ENCODE measurements at regions of chr19 and their contacts with region 1.

Region 1: DNA sequence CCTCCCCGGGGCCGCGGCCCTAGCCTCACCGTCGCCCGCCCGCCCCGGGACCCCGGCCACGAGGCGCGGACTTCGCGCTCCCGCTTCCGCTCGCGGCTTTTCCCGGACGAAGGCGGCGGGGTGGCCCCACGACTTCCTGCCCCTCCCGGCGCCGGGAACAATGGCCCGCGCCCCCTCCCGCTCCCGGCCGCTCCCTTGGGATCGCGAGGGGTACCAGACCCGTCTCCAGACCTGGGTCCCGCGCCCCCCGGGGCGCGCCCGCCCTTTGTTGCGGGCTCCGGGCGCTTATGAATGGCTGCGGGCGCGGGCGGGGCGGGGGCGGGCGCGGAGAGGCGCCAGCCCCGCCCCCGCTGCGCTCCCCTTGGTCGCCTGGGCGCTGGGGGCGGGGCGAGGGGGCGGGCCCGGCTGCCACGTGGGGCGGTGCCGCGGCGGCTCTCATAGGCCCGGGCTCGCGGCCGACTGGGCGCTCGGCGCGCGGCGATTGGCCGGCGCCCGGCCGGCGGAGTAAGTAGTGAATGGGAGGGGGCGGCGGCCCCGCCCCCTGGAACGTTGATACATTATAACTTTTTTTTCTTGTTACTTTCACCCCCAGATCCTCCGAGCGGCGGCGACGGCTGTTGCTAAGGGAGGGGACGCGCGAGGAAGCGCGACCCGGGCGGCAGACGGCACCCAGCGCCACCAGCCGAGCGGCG is 1.1 kb downstream of the MIDN start:
- DNase-seq: peak; percentile 87 to 94
- ATAC-seq: peak; percentile 12
- H3K4me3 ChIP-seq: peak overlapping the region; percentile 69 to 89 (median 85)
- H3K27ac ChIP-seq: peak overlapping the region; percentile 95 to 100 (median 98)
- H3K4me1 ChIP-seq: peaks cover 51 to 67% of the 10 kb centered on the region in 2 donors
- H3K27me3 ChIP-seq: no peaks in the 10 kb centered on the region
- CTCF ChIP-seq: no peak
- POLR2A ChIP-seq: peak; percentile 94 to 100

Region 2: DNA sequence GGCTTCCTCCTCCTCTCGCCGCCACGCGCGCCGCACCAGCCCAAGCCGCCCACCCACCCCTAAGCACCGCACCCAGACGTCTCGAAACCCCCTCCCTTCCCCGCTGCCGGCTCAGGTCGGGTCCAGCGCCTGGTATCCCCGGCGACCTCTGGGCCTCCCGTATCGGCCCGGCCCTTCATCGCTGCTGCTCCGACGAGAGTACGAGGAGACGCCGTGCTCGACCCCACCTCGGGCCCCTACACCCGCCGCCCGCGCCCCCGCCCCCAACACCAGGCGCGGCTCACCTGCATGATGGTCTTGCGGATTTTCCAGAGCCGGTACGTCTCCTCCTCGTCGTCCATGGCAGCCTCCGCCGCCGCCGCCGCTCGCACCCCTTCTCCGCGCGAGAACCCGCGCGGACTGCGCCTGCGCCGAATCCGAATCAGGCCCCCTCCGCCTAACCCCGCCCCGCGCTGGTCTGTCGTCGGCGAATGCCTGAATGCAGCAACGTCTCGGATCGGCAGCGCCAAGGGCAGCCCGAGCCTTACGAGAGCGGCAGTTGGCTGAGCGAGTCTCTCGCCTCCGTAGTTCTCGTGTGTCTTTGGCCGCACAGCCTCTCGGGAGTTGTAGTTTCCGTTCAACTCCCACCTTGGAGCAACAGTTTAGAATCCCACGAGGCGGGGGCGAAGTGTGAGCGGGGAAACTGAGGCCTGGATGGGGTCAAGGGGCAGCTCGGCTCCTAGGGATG is 154.3 kb before region 1 on chr19 and contains the start of gene POLR2E:
- in situ Hi-C with region 1: no loop called
- intact Hi-C with region 1: no loop called
- DNase-seq: peak; percentile 99
- ATAC-seq: peak; percentile 95 to 98
- H3K4me3 ChIP-seq: peak within 1 kb of the TSS; percentile 79 to 99 (median 98)
- H3K27ac ChIP-seq: peak within 1 kb of the TSS; percentile 79 to 94 (median 92)
- H3K4me1 ChIP-seq: peaks cover 26 to 30% of the 10 kb centered on the region in 2 donors
- H3K27me3 ChIP-seq: no peaks in the 10 kb centered on the region
- CTCF ChIP-seq: no peak
- POLR2A ChIP-seq: peak; percentile 88 to 92
- total RNA-seq, gene POLR2E: 118 to 263 (median 228) TPM

Region 3: DNA sequence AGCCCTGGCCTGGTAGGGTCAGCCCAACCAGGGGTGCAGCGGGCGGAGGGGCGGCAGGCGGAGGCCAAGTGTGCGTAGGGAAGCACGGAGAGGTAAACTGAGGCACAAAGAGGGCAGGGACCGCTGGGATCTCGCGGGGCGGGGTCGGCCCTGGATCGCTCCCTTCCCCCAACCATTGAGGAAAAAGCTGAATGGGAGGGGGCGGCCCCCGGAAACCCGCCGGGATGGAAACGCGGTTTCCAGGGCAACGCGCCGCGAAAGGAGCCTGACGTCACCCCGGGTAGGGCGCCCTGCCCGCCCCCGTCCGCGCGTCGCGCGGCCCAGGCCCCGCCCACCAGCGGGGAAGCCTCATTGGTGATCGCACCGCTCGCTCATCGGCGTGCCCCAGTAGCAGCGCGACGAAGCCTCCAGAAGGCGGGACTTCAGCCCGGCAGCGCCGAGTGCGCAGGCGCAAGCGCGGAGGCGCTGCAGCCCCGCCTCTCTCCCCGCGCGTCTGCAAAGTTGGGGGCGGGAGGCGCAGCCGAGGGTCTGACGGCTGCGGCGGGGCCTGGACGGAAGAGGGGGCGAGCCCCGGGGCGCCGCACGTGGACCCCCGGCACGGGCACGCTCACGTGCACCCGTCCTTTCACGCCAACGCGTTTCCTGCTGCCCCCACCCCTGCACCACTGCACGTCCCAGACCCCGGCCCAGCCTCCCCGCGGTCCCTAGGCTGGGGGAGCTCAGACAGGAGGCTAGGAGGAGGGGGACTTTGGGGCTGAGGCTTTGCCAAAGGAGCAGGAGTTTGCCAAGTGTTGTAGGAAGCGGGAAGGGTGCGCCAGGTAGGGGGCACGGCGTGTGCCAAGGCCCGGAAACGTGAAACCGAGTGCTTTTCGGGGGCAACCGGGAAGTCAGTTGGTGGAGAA is 11.4 kb after region 1 on chr19:
- in situ Hi-C with region 1: no loop called
- intact Hi-C with region 1: loop called (anchors 1 kb)
- DNase-seq: peak; percentile 94
- ATAC-seq: peak; percentile 70 to 80
- H3K4me3 ChIP-seq: peak overlapping the region; percentile 60 to 93 (median 74)
- H3K27ac ChIP-seq: peak overlapping the region; percentile 94 to 99 (median 96)
- H3K4me1 ChIP-seq: peaks cover 42 to 43% of the 10 kb centered on the region in 2 donors
- H3K27me3 ChIP-seq: no peaks in the 10 kb centered on the region
- CTCF ChIP-seq: no peak
- POLR2A ChIP-seq: peak; percentile 40 to 52

Region 4: DNA sequence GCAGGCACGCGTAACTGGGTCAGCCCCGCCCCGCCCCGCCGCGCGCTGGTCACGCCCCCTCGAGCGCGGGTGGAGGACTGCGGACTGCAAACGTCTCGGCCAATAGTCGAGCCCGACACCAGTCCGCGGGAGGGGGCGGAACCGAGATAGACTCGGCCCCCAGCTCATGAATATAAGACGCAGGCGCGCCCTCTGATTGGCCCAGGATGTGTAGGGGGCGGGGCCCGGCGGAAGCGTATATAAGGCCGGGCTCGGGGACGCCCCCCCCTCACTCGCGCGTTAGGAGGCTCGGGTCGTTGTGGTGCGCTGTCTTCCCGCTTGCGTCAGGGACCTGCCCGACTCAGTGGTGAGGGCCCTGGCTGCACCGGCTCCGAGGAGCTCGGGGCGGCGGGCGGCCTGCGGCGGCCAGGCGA is 19.6 kb after region 1 on chr19 and contains the start of gene CIRBP:
- in situ Hi-C with region 1: no loop called
- intact Hi-C with region 1: loop called (anchors 1 kb)
- DNase-seq: peak; percentile 100
- ATAC-seq: peak; percentile 66 to 76
- H3K4me3 ChIP-seq: peak within 1 kb of the TSS; percentile 51 to 81 (median 72)
- H3K27ac ChIP-seq: peak within 1 kb of the TSS; percentile 92 to 99 (median 98)
- H3K4me1 ChIP-seq: peaks cover 66 to 72% of the 10 kb centered on the region in 2 donors
- H3K27me3 ChIP-seq: no peaks in the 10 kb centered on the region
- CTCF ChIP-seq: peak in 1 of 5 experiments; percentile 40
- POLR2A ChIP-seq: peak; percentile 99 to 100
- total RNA-seq, gene CIRBP: 274 to 578 (median 418) TPM

Region 5: DNA sequence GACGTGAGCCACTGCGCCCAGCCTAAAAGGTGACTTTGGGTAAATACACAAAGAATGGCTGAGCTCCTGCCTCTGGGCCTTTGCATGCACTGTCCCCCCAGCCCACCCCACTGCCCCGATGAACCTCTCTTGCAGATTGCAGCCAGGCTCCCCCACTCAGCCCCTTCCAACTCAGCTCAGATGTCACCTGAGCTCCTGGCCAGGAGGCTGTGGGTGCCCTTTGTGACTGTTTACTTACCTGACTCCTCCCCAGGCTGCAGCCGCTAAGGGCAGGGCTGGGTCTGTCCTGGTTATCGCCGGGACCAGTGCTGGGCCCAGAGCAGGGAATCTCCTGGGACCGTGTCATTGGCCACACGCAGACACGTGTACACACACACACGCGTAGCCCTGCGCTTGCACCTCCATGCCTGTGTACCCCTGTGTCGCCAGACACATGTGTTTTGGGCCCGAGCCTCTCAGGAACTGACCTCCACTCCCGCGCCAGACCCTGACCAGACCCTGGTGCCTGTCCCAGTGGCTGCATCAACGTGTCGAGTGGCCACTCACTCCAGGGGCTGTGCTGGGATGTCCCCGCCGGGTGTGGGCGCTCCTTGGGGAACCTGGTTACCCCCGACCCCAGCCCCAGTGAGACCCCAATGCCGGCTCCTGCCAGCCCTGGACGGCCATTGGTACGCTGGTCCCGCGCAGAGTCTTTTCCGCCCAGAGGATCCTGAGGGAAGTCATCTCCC is 54.9 kb after region 1 on chr19:
- in situ Hi-C with region 1: no loop called
- intact Hi-C with region 1: no loop called
- DNase-seq: no peak
- ATAC-seq: no peak
- H3K4me3 ChIP-seq: no peak overlapping the region
- H3K27ac ChIP-seq: no peak overlapping the region
- H3K4me1 ChIP-seq: no peaks in the 10 kb centered on the region
- H3K27me3 ChIP-seq: peaks cover 0 to 3% (median 0%) of the 10 kb centered on the region in 3 donors
- CTCF ChIP-seq: no peak
- POLR2A ChIP-seq: no peak

Region 6: GRCh38 chr19:2168619-2169424 is 919.4 kb after region 1 on chr19:
- in situ Hi-C with region 1: no loop called
- intact Hi-C with region 1: loop called (anchors 10 kb)
- DNase-seq: peak; percentile 99 to 100
- ATAC-seq: peak; percentile 84 to 88
- H3K4me3 ChIP-seq: peak overlapping the region in 2 of 4 donors; percentile 1 to 22
- H3K27ac ChIP-seq: peak overlapping the region; percentile 91 to 100 (median 96)
- H3K4me1 ChIP-seq: peaks cover 75 to 81% of the 10 kb centered on the region in 2 donors
- H3K27me3 ChIP-seq: no peaks in the 10 kb centered on the region
- CTCF ChIP-seq: no peak
- POLR2A ChIP-seq: peak; percentile 57 to 76

Measured in gastrocnemius medialis (tissue), 4 donors.